Activated CD4-positive, alpha-beta T cell treated with anti-CD3 and anti-CD28 coated beads for 36 hours (primary cell): ENCODE measurements at regions of chr4 and their contacts with region 1.

Region 1: DNA sequence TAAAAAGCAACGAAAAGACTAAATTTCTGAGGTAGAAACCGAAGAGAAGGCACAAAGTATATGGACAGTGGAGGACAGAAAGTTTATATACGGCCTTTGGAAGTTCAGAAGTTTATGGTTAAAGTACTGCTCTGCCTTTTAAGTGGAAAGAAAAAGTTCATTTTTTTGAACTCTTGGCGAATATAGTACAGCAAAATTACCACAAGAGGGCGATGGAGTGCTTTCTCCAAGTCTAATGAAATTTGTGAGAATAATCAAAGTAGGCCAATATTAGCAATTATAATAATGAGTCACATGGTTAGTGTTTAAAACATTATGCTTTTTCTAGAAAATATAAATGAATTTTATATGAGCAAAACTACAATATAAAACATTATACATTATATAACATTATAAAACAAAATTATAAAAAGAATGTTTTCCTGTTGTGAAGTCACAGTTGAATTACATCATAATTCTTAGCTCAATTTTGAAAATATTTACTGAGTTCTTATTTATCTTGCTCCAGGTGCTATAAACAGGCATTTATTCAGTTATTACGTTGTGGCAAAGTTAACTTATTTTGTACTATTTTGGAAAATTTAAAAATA is 136.2 kb upstream of the BMPR1B start:
- DNase-seq: peak; percentile 10
- ATAC-seq: no peak
- H3K4me3 Mint-ChIP-seq: no peak overlapping the region
- H3K27ac Mint-ChIP-seq: no peak overlapping the region
- H3K4me1 Mint-ChIP-seq: no peaks in the 10 kb centered on the region
- H3K27me3 Mint-ChIP-seq: no peaks in the 10 kb centered on the region

Region 2: DNA sequence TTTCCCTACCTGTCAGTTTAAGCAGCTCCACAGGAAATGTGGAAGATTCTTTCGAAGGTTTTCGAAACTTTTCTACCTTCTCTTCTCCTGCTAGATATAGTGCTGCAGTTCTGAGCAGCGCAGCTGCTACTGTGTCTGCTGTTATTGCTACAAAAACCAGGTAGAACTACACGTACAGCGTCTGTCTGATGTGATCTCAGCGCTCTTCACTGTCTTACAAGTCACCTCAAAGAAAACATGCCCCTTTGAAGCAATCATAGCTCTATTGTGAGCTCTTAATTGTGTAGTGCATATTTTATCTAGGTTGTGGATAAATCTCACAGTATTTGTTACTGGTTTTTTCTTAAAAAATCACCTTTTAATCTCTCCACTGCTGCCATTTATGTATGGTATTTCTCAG is 11.4 kb before region 1 on chr4:
- CTCF ChIA-PET with region 1: interaction called, 11 read pairs
- POLR2A ChIA-PET with region 1: interaction called, 3 read pairs
- intact Hi-C with region 1: no loop called
- DNase-seq: no peak
- ATAC-seq: no peak
- H3K4me3 Mint-ChIP-seq: no peak overlapping the region
- H3K27ac Mint-ChIP-seq: no peak overlapping the region
- H3K4me1 Mint-ChIP-seq: peaks cover 11% of the 10 kb centered on the region
- H3K27me3 Mint-ChIP-seq: no peaks in the 10 kb centered on the region

Region 3: DNA sequence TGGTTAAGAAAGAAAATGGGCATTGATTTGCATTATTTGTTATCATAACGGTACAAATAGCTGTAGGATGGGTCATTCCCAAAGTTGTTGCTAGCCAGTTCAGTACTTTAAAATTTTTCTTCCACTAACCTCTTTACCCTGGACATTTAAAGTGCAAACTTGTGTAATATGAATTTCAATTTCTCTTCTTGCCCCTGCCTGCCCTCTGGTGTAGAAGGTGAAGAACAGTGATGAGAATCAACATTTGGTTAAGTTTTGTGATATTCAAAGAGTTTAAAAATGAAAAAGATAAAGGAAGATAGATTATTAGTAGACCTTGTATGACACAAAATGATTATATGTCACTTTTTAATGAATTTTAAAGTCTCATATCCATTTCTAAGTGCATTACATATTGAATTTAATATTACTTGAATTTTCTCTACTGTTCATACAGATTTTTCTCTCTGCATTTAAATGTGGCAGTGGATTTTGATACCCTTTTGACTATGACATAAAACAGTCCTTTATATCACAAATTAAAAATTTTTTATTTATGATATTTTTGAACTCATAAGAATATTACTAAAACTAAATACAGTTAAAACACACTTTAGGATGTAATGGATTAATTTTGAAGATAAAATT is 473.9 kb after region 1 on chr4:
- CTCF ChIA-PET with region 1: interaction called, 7 read pairs
- POLR2A ChIA-PET with region 1: no interaction called
- intact Hi-C with region 1: loop called (anchors 1 to 10 kb)
- DNase-seq: peak; percentile 7
- ATAC-seq: no peak
- H3K4me3 Mint-ChIP-seq: no peak overlapping the region
- H3K27ac Mint-ChIP-seq: no peak overlapping the region
- H3K4me1 Mint-ChIP-seq: peaks cover 9% of the 10 kb centered on the region
- H3K27me3 Mint-ChIP-seq: no peaks in the 10 kb centered on the region

Region 4: GRCh38 chr4:95124906-95125504 is 503.4 kb after region 1 on chr4:
- CTCF ChIA-PET with region 1: interaction called, 11 read pairs
- POLR2A ChIA-PET with region 1: no interaction called
- intact Hi-C with region 1: loop called (anchors 1 kb)
- DNase-seq: peak; percentile 14
- ATAC-seq: no peak
- H3K4me3 Mint-ChIP-seq: no peak overlapping the region
- H3K27ac Mint-ChIP-seq: no peak overlapping the region
- H3K4me1 Mint-ChIP-seq: peaks cover 4% of the 10 kb centered on the region
- H3K27me3 Mint-ChIP-seq: peaks cover 1% of the 10 kb centered on the region